PC-9 (cell line): ENCODE measurements at regions of chr2 and their contacts with region 1.

Region 1: DNA sequence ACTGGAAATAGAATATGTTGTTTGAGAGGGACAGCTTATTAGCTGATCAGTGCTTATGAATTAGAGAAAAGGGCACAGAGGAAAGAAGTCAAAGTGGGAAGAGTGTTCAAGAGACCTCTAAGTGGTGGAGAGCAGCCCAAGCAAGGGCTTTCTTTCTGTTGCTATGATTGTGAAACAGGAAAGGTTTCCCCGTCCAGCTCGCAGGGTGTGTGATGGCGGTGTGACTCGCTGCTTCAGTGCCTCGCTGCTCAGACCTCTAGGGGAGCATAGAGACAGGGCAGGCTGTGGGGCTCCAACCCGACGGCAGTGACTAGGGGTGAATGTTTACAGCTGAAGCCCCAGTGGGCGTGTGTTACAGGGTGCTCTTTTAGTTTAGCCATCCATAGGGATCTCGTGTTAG is 166.5 kb upstream of the COPS8 start:
- DNase-seq: no peak
- H3K4me3 ChIP-seq: no peak overlapping the region
- H3K27ac ChIP-seq: no peak overlapping the region
- H3K4me1 ChIP-seq: no peaks in the 10 kb centered on the region
- H3K27me3 ChIP-seq: peaks cover 70% of the 10 kb centered on the region
- CTCF ChIP-seq: no peak

Region 2: DNA sequence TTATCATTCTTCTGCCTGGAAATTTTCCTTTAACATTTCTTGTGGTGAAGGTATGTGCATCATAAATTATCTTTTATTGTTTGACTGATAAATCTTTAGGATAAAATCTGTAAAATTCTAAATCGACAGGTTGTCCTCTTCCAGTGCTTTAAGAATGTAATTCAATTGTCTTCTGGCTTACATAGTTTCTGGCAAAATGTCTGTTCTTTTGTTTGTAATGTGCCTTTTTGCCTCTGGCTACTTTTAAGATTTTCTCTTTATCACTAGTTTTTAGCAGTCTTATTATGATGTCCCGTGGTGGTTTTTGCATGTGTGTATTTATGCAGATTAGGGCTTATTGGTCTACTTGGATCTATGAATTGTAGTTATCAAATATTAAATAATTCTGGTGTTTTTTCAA is 37.1 kb before region 1 on chr2:
- CTCF ChIA-PET with region 1: no interaction called
- POLR2A ChIA-PET with region 1: interaction called, 11 read pairs
- intact Hi-C with region 1: no loop called
- DNase-seq: no peak
- H3K4me3 ChIP-seq: no peak overlapping the region
- H3K27ac ChIP-seq: no peak overlapping the region
- H3K4me1 ChIP-seq: no peaks in the 10 kb centered on the region
- H3K27me3 ChIP-seq: peaks cover 22% of the 10 kb centered on the region; the same call in 1 of the 2 replicates
- CTCF ChIP-seq: no peak